ENCODE measurements at regions of chr18 and their contacts with region 1.

Region 1: DNA sequence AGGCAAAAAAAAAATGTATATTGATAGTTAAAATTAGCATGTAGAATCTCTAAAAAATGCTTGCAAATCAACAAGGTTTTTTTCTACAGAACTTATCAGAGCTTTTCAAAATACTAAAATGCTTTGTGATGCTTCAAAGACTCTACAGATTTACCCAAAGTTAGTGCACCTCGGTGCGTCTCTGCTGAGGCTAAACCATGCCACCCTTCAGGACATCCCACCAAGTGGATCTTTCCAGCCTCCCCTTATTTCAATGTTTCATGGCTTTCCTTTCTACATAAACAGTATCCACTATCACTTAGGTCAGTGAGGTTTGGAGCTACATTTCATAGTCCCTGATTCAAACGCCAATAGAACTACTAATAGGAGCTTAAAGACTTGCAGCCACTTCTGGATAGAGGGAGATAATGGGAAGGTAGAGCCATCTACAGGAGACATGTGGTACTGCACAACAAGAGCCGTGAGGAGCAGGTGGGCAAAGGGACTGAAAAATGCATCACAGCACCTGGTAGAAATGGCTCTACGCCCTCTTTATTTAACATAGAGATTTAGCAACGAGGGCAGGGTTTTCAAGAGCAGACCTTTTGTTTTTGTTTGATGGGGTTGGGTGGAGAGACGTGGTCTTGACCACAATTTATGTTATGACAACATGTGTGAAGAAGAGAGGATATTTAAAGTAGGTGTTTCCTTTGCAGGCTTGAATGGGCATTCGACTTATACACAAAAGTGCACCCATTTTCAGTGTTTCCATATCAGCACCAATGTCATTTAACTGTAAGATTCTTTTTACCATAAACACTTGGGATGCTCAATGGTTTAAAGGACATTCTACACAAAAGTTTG is 56.1 kb upstream of the SLC35G4 start:
- H3K4me3 ChIP-seq: no peak overlapping the region
- H3K27ac ChIP-seq: no peak overlapping the region
- H3K4me1 ChIP-seq: no peaks in the 10 kb centered on the region
- CTCF ChIP-seq: peak; percentile 73; the same call in 1 of the 2 replicates

Region 2: GRCh38 chr18:11518788-11519685 is 34.3 kb before region 1 on chr18:
- CTCF ChIA-PET with region 1: interaction called, 44 read pairs
- POLR2A ChIA-PET with region 1: no interaction called
- H3K4me3 ChIP-seq: no peak overlapping the region
- H3K27ac ChIP-seq: no peak overlapping the region
- H3K4me1 ChIP-seq: no peaks in the 10 kb centered on the region
- CTCF ChIP-seq: peak; percentile 82

Region 3: DNA sequence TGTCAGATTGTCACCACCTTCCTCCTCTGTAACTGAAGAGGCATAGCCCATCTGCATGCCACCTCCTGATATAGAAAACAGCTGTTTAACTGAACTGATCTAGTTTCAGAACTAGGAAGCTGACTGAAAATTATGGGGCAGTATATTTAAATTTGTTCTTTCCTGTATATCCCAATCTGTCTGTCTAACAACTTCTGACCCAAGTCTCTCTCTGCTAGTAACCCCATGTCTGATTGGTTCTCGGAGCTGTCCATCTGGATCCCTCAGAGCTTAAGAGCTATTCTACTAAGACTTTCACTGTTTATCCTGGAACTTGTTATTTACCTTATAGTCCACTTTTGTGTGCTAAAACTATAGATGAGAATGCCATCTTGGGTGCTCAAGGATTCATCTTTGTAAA is 12.1 kb before region 1 on chr18:
- CTCF ChIA-PET with region 1: interaction called, 11 read pairs
- POLR2A ChIA-PET with region 1: no interaction called
- H3K4me3 ChIP-seq: no peak overlapping the region
- H3K27ac ChIP-seq: no peak overlapping the region
- H3K4me1 ChIP-seq: no peaks in the 10 kb centered on the region
- CTCF ChIP-seq: no peak

Region 4: DNA sequence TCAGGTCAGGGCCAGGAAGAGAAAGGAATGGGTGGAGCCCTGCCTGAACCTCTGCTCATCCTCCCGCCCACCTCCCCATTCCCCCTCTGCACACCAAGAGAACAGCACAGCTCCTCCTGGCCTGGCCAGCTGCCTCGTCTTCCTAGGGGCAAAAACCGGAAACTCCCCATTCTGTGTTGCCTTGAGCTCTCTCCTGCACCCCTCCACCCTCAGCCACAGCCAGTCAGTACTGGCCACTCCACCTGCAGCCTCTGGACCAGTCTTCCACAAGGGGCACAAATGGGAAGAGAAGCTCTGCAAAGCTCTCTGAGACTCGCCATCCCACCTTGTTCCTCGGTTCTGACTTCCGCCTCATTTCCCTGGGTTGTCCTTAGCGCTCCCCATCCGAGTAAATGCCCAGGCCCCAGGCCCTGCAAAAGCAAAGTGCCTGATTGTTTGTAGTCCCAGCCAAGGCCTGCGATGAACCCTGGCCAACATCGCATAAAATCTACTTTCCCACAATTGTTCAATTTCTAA is 16.8 kb after region 1 on chr18:
- CTCF ChIA-PET with region 1: interaction called, 13 read pairs
- POLR2A ChIA-PET with region 1: no interaction called
- H3K4me3 ChIP-seq: no peak overlapping the region
- H3K27ac ChIP-seq: no peak overlapping the region
- H3K4me1 ChIP-seq: no peaks in the 10 kb centered on the region
- CTCF ChIP-seq: no peak

Region 5: GRCh38 chr18:11600321-11600720 is 47.0 kb after region 1 on chr18:
- CTCF ChIA-PET with region 1: no interaction called
- POLR2A ChIA-PET with region 1: no interaction called
- H3K4me3 ChIP-seq: no peak overlapping the region
- H3K27ac ChIP-seq: no peak overlapping the region
- H3K4me1 ChIP-seq: no peaks in the 10 kb centered on the region
- CTCF ChIP-seq: no peak

Region 6: GRCh38 chr18:11741505-11742145 is 188.3 kb after region 1 on chr18:
- CTCF ChIA-PET with region 1: no interaction called
- POLR2A ChIA-PET with region 1: no interaction called
- H3K4me3 ChIP-seq: no peak overlapping the region
- H3K27ac ChIP-seq: no peak overlapping the region
- H3K4me1 ChIP-seq: no peaks in the 10 kb centered on the region
- CTCF ChIP-seq: no peak; the same call in 1 of the 2 replicates

Region 7: DNA sequence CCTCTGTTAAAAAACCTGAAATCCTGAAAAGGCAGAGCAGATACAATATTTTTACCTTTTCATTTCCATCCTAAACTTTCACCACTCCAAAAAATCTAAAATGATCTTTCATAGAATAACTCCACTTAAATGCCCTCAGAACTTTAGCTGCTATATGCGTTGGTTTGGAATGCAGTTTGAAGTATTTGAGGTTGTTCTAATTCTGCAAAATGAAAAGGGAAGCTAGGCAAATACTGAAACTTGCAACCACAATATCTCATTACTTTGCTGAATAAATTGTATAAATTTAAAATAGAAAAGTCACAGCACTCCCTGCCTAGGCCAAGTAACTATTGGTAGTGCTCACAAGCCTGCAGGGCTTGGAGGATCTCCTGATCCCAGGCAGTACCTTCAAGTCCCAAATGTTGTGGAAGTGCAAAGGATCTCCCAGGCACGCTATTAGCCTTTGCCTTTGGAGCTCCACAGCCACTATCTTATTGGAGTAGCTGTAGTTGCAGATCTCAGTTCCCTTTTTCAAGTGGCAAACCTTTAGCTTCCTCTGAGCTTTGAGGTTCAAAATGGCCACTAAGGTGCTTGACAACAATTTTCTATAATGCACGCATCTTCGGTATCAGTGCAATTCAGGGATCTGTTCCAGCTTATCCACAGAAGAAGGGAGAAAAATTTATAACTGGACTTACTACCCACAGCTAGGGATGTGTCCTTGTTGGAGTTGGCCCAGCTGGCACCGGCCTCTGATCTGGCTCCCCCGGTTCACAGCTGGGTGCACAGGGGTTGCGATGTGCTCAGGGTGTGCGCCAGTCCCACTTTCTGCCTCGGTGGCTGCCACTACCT is 496.9 kb after region 1 on chr18:
- CTCF ChIA-PET with region 1: no interaction called
- POLR2A ChIA-PET with region 1: no interaction called
- H3K4me3 ChIP-seq: no peak overlapping the region
- H3K27ac ChIP-seq: no peak overlapping the region
- H3K4me1 ChIP-seq: no peaks in the 10 kb centered on the region
- CTCF ChIP-seq: no peak

Measured in HEK293 (cell line).